ENCODE measurements at regions of chr17 and their contacts with region 1.

Region 1: DNA sequence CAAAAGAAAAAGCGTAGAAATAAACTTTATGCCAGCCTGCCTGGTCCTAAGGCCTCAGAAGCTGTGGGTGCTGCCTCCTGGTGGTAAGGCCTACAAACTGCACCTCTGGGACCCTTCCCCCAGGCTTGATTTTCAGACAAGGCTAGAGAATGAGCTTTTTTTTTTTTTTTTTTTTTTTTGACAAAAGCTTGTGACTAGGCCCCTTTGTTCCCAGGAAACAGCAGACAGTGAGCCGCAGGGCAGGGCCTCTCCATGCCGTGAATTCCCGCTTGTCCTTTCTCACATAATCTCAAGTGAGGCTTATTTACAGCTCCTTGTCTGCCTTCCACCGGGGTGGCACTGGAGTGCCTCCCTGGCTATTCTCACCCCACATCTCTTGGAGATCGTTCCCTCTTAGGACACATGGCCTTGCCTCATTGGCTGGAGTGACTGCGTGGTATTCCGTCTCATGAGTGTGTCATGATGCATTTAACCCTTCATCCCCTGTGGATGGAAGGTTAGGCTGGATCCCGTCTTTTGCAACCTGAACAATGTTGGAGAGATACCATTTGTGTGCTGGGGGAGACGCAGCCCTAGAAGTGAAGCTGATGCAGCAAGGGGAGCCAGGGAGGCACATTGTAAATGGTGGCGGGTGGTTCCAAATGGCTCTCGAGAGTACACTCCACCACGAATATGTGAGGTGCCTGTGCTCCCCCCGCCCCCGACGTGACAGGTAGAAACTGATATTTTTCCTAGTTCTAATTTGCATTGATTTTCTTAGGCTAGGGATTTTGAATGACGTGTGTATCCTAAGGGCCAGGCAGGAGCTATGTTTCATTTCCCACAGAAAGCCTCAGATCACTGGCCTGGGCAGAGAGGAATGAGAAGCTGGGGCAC is 49.6 kb downstream of the USP22 start:
- DNase-seq: peak; percentile 84
- H3K4me3 ChIP-seq: no peak overlapping the region
- H3K27ac ChIP-seq: no peak overlapping the region
- H3K4me1 ChIP-seq: no peaks in the 10 kb centered on the region
- H3K27me3 ChIP-seq: no peaks in the 10 kb centered on the region
- CTCF ChIP-seq: peak; percentile 98

Region 2: DNA sequence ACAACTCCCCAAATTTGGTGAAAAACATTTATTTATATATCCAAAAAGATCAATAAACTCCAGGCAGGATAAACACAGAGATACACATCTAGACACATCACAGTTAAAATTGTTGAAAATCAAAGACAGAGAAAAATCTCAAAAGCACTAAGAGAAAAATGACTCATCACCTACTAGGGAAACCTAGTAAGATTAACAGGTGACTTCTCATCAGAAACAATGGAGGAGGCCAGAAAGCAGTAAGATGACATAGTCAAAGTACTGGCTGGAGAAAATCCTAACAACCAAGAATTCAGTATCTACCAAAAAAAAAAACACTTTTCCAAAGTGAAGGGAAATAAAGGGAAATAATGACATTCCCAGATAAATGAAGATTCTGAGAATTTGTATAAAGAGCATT is 1159.3 kb before region 1 on chr17:
- CTCF ChIA-PET with region 1: interaction called, 12 read pairs
- POLR2A ChIA-PET with region 1: no interaction called
- intact Hi-C with region 1: no loop called
- DNase-seq: no peak
- H3K4me3 ChIP-seq: no peak overlapping the region
- H3K27ac ChIP-seq: no peak overlapping the region
- H3K4me1 ChIP-seq: no peaks in the 10 kb centered on the region
- H3K27me3 ChIP-seq: no peaks in the 10 kb centered on the region
- CTCF ChIP-seq: no peak

Region 3: DNA sequence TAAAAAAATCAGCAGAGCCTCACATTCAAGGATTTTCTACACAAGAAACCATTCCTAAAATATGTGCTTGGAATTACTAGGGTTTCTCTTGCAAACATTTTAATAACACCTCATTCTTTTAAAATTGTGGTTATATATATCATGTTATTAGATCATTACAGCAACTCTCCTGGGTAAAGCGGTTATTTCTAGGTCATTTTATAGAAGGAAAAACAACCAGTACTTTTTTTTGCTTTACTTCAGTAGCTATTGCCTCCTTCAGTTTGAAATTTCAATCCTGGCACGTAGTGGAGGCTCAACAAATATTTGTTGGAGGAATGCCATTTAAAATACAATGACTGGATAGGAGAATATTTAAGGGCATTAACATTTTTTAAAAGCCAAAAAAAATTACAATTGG is 193.1 kb before region 1 on chr17:
- CTCF ChIA-PET with region 1: interaction called, 8 read pairs
- POLR2A ChIA-PET with region 1: no interaction called
- intact Hi-C with region 1: loop called (anchors 2 kb)
- DNase-seq: no peak
- H3K4me3 ChIP-seq: no peak overlapping the region
- H3K27ac ChIP-seq: no peak overlapping the region
- H3K4me1 ChIP-seq: no peaks in the 10 kb centered on the region
- H3K27me3 ChIP-seq: no peaks in the 10 kb centered on the region
- CTCF ChIP-seq: no peak

Region 4: DNA sequence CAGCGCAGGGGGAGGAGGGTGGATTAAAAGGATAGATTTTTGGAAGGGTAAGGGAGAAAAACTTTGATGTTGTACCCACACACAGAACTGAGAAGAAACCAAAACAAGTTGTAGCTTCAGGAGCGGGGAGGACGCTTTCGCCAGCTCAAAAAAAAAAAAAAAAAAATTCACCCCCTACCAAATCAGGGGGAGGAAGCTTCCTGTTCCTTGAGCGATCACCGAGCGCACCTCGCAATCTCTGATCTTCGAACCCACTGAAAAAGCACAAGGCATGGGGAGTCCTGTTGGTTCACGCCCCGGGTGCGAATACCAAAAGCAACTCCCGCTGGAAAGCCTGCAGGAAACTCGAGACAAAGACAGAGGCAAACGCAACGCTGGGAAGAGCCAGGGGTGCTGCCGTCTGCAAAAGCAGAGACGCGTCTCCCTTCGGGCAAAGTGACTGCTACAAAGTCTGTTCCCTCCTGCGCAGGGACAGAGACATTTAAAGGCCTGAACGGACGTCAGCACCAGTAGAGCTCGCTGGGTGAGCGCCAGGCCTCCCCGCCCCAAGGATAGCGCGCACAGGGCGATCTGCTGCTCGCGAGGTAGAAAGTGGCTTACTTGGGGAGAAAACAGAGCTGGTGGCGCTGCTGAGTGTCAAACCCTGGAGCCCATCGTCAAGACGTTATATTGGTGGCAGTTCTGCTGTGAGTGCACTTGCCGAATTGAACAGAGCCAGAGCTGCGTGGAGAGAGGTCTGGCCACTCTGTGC is 140.8 kb before region 1 on chr17:
- CTCF ChIA-PET with region 1: interaction called, 3 read pairs
- POLR2A ChIA-PET with region 1: no interaction called
- intact Hi-C with region 1: loop called (anchors 5 kb)
- DNase-seq: peak; percentile 80
- H3K4me3 ChIP-seq: peak overlapping the region; percentile 46
- H3K27ac ChIP-seq: no peak overlapping the region
- H3K4me1 ChIP-seq: peaks cover 9% of the 10 kb centered on the region
- H3K27me3 ChIP-seq: peaks cover 14% of the 10 kb centered on the region
- CTCF ChIP-seq: 0 out of 2 replicates have a peak, but pooled peaks have one; percentile 40

Region 5: GRCh38 chr17:20890338-20890737 is 102.9 kb before region 1 on chr17:
- CTCF ChIA-PET with region 1: no interaction called
- POLR2A ChIA-PET with region 1: no interaction called
- intact Hi-C with region 1: loop called (anchors 10 kb)
- DNase-seq: no peak
- H3K4me3 ChIP-seq: no peak overlapping the region
- H3K27ac ChIP-seq: no peak overlapping the region
- H3K4me1 ChIP-seq: no peaks in the 10 kb centered on the region
- H3K27me3 ChIP-seq: no peaks in the 10 kb centered on the region
- CTCF ChIP-seq: no peak

Region 6: DNA sequence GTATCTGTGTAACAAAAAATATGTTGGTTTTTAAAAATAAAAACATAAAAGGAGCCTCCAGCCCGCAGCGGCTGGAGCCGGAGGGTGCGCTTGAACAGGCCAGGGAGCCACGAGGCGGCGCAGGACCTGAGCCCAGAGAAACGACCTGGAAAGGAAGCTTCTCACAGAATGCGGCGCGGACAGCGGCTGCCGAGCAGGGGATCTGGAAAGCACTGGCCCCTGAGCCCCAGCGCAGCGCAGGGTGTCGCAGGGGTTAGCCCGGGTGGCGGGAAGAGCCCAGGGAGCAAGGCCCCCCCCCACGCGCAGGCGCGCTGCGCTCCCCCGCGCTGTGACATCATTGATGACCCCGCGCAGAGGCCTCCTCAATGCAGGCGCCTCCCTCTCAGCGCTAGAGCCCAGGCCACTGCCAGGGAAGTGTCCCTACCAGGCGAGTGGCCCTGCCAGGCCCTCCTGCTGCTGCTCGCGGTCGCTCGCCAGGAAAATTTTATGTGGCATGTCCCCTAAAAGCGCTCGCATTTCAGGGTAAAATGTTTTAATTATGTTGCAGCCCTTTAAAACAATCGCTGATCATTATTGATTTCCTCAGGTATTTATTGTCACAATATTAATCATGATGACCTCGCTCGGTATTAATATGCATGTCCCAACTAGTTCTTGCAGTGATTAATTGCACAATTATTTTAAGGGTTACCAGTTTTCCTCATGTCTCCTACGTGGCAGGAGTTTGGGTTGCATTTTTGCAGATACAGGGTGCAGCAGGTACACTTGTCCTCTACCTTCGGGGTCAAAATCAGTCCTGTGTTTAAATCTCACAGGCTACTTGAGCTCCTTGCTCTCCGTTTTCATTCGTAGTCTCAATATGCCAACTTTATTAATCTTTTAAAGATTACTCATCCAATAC is 84.6 kb before region 1 on chr17:
- CTCF ChIA-PET with region 1: interaction called, 6 read pairs
- POLR2A ChIA-PET with region 1: no interaction called
- intact Hi-C with region 1: loop called (anchors 5 kb)
- DNase-seq: peak; percentile 84
- H3K4me3 ChIP-seq: peak overlapping the region; percentile 40
- H3K27ac ChIP-seq: peak overlapping the region; percentile 70
- H3K4me1 ChIP-seq: peaks cover 8% of the 10 kb centered on the region
- H3K27me3 ChIP-seq: no peaks in the 10 kb centered on the region
- CTCF ChIP-seq: peak; percentile 55

Region 7: DNA sequence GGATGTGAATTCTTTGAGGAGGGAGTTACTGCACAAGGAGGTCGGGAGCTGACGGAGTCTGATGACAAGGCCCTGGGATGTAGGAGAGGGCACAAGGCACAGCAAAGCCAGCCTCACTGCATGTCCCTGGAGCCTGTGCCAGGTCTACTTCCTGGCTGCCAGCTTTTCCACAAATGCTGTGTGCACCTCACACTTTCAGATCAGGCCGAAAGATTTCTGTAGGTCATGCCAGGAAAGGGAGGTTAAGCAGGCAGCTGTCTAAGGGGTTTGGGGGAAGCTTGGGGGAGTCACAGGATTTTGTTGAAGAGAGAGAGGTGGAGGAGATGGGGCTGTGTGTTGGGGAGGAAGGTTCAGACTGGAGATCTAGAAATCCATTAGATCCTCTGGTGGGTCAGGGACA is 1491.6 kb after region 1 on chr17:
- CTCF ChIA-PET with region 1: no interaction called
- POLR2A ChIA-PET with region 1: no interaction called
- intact Hi-C with region 1: no loop called
- DNase-seq: no peak
- H3K4me3 ChIP-seq: no peak overlapping the region
- H3K27ac ChIP-seq: no peak overlapping the region
- H3K4me1 ChIP-seq: no peaks in the 10 kb centered on the region
- H3K27me3 ChIP-seq: no peaks in the 10 kb centered on the region
- CTCF ChIP-seq: no peak